Left cardiac atrium (tissue), 4 donors: ENCODE measurements at regions of chr3 and their contacts with region 1.

Region 1: GRCh38 chr3:65785065-65785645 is 253.6 kb downstream of the MAGI1 start:
- DNase-seq: no peak
- ATAC-seq: peak; percentile 29 to 38

Region 2: DNA sequence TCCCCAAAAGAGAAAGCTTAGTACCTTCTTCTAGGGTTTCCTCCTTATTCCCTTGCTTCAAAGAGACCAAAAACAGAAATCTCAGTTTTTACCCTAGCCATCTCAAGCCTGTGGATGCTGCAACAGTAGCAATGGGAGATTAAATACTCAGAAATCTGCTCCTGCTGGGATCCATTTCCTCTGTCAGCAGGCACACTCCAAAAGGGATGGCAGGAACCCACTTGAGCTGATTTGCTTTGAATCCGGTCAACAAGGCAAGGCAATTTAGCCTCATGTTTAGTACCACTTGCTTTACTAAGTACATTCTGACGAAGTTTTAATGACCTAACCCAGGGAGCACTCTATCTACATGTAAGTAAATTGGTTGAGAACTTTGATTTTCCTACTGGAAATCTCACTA is 507.4 kb before region 1 on chr3:
- intact Hi-C with region 1: no loop called
- DNase-seq: no peak
- ATAC-seq: no peak

Region 3: DNA sequence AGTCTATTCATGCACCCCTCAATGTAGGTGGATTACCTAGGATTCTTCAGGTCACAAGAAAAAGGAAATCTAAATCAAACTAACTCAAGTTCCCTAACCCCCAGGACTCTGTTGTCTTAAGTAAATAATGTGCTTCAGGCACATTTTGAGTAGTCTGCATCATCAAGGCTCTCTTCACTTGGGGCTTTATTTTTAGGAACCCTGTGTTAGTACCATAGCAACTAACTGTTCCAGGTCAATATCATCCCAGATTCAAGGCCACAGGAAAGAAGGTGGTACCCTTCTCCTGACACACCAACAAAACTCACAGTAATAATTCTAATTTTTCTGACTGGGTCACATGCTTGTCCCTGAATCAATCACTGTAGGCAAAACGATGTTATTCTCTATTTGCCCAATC is 35.4 kb after region 1 on chr3:
- intact Hi-C with region 1: no loop called
- DNase-seq: no peak
- ATAC-seq: no peak

Region 4: DNA sequence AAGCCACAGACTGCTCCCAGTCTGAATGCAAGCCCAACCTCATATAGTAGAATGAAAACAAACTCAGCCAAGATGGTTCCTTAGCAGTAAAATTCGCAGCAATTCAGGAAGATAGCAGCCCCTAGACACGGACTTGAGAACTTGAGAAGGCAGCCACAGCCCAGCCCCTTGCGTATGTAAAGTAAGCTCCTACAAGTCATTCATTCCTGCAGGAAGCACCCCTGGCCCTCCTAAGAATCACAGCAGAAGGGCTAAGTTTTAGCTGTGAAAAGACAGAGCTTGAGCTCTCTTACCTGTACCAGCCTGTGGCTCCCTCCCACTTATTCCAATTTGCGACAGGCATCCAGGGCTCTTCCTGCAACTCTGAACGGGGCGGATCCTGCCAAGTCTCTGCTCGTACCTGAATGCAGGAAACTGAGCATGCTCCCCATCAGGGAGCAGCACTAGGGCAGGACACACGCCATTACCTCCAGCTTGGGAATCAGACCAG is 117.2 kb after region 1 on chr3:
- intact Hi-C with region 1: loop called in 1 of 2 experiments (anchors 10 kb)
- DNase-seq: no peak
- ATAC-seq: peak in 1 of 2 donors; percentile 17

Region 5: GRCh38 chr3:66038726-66039589 is 253.8 kb after region 1 on chr3 and contains the start of gene MAGI1:
- intact Hi-C with region 1: loop called in 1 of 2 experiments (anchors 10 kb)
- DNase-seq: peak; percentile 91
- ATAC-seq: peak; percentile 91 to 92
- total RNA-seq, gene MAGI1: 27.7 to 30.0 TPM

Region 6: DNA sequence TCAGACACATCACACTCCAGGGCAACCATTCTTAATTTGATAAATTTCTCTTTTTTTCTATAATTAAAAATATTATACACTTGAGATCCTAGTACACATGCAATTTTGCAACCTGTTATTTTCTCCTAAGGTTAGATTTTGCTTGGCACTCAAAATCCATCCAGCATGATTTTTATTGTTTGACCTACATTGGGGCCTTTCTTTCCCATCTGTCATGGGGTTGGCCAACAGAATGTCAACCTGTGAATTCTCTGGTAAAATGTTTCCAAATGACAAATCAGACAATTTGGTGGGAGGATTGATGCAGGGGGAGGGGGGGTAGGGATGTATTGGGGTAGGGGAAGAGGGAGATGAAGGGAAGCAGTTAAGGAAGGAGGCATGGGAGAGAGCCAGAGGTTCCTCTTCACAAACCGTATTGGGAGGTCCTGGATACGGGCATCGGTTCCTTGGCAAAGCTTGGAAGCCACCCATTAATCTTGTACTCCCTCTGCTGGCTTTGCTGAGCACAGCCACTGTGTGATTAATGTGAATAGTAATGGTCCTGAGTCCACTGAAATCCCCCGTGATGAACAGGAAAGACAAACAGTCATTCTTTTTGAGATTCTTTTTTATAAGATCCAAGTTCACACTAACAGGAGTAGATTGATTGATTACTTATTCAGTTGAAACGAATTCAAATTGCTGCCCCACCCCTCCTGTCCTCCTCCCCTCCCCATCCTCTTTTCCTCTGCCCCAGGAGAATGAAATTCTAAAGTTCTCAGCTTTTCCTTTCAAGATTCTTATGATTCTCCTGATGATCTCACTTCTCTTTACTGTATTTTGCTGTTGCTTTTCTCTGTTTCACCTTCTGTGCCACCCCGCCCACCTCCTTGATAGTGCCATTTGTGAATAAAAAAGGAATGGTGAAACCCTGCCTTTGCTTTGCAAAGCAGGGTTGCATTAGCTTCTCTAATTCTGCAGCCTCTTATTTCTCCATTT is 353.5 kb after region 1 on chr3:
- intact Hi-C with region 1: loop called (anchors 1 to 10 kb)
- DNase-seq: peak; percentile 35
- ATAC-seq: peak; percentile 89 to 91